ENCODE measurements at regions of chr4 and their contacts with region 1.

Region 1: GRCh38 chr4:112031712-112032328 is 113.4 kb upstream of the FAM241A start:
- DNase-seq: peak; percentile 48 to 65
- H3K4me3 ChIP-seq: no peak overlapping the region
- H3K4me1 ChIP-seq: no peaks in the 10 kb centered on the region
- H3K27me3 ChIP-seq: peaks cover 53% of the 10 kb centered on the region

Region 2: DNA sequence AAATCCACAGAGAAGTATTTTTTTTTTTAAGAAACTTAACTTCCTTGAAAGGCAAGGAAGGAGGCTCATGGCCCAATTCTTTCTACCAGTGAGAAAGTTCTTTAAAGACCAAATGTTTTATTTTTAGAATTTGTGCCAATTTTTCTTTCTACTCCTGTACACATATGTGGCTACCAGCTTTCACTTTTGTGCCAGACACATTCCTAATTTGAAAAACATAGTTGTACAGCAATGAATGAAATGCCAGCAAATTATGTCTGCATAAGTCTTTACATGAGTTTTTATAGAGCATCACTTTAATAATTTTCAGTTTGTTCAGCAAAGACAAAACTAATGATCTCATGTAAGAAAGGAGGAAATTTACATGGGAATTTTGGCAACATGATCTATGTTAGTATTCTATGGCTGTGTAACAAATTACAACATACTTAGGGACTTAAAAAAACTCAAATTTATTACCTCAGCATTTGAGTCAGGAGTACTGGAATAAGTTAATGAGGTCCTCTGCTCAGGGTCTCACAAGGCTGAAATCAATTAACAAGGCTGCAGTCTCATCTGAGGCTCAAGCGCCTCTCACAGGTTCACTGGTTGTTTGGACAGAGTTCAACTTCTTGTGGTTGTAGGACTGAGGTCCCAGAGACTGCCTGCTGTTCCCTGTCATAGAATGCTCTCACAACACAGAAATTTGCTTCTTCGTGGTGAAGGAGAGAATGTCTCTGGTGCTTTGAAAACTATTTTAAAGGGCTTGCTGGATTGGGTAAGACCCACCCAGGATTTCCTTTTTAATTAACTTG is 564.8 kb before region 1 on chr4:
- in situ Hi-C with region 1: no loop called
- DNase-seq: no peak
- H3K4me3 ChIP-seq: no peak overlapping the region
- H3K4me1 ChIP-seq: no peaks in the 10 kb centered on the region
- H3K27me3 ChIP-seq: 0 out of 2 replicates have a peak, but pooled peaks cover 2% of the 10 kb centered on the region

Region 3: GRCh38 chr4:111641955-111642579 is 389.8 kb before region 1 on chr4:
- in situ Hi-C with region 1: loop called (anchors 10 kb)
- DNase-seq: peak; percentile 83
- H3K4me3 ChIP-seq: no peak overlapping the region
- H3K4me1 ChIP-seq: no peaks in the 10 kb centered on the region
- H3K27me3 ChIP-seq: 0 out of 2 replicates have a peak, but pooled peaks cover 5% of the 10 kb centered on the region

Region 4: DNA sequence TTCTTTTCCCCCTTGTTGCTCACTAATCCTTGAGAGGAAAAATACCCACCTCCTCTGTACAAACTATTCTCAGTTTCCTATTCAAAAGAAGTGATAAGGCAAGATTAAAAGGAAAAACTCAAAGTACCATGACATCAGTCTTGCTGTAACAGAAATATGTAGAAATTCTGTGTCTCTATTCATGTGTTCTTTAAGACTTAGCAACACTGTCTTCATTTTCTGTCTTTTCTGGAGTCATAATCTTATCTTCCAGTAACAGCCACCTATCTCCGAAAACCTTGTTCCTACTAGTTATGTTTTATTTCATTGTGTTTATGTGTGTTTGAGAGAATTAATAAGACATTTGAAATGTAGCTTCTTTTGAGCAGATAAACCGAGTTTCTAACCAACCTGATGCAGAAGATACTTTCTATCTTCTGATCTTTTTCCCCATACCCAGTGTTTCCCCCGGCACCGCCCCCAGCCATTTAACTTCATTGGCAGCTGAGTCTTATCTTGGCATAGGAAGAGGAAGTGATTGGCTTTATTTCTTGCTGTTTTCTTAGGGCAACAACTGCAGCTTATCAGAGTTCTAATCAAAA is 121.5 kb after region 1 on chr4:
- in situ Hi-C with region 1: no loop called
- DNase-seq: no peak
- H3K4me3 ChIP-seq: no peak overlapping the region
- H3K4me1 ChIP-seq: peaks cover 13% of the 10 kb centered on the region
- H3K27me3 ChIP-seq: no peaks in the 10 kb centered on the region

Region 5: GRCh38 chr4:112312610-112313239 is 280.9 kb after region 1 on chr4:
- in situ Hi-C with region 1: no loop called
- DNase-seq: no peak
- H3K4me3 ChIP-seq: no peak overlapping the region
- H3K4me1 ChIP-seq: peaks cover 6% of the 10 kb centered on the region; the same call in 1 of the 2 replicates
- H3K27me3 ChIP-seq: no peaks in the 10 kb centered on the region

Region 6: GRCh38 chr4:112735474-112735951 is 703.7 kb after region 1 on chr4:
- in situ Hi-C with region 1: no loop called
- DNase-seq: no peak
- H3K4me3 ChIP-seq: no peak overlapping the region
- H3K4me1 ChIP-seq: no peaks in the 10 kb centered on the region
- H3K27me3 ChIP-seq: no peaks in the 10 kb centered on the region